ENCODE measurements at regions of chr17 and their contacts with region 1.

Region 1: DNA sequence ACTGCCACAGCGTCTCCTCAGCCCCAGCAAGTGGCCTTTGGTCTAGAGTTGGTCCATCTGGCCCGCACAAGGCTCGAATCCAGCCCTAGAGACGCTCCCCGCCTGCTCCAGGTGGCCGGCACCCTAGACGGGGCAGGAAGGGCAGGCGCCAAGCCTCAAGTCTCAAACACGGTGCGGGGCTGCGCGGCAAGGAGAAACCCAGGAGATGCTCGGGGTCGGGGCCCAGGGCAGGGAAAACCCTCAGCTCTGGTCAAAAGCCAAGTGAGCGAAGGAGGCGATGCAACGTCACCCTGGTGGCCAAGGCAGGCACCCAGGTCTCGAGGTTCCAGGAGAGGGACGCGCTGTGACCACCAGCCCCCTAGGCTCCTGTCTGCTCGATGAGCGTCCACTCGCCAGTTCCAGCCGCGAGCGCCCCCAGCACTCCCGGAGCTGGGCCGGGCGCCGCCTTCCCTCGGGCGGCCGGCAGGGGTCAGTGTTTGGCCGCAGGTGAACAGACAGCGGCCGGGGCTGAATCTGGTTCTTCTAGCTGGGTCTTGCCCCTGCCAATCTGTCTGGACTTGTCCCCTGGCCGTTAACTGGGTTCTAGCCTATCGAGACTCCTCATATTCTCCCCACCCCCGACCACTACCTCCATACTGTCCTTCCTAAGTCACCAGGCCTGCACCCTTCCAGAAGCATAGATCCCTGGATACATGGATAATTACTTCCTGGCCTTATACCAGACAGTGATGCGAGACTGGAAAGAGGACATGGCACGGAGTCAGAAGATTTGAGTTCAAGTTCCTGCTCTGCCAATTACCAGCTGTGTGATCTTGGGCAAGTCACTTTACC is 44.0 kb downstream of the PRAC1 start:
- DNase-seq: peak; percentile 67 to 88
- H3K4me3 ChIP-seq: peak overlapping the region; percentile 26
- H3K4me1 ChIP-seq: peaks cover 2% of the 10 kb centered on the region; the same call in 1 of the 2 replicates
- H3K27me3 ChIP-seq: no peaks in the 10 kb centered on the region

Region 2: GRCh38 chr17:48577946-48578615 is 100.3 kb before region 1 on chr17 and contains the start of gene HOXB4:
- in situ Hi-C with region 1: no loop called
- DNase-seq: peak; percentile 81 to 89
- H3K4me3 ChIP-seq: peak within 1 kb of the TSS; percentile 58
- H3K4me1 ChIP-seq: peaks cover 24% of the 10 kb centered on the region
- H3K27me3 ChIP-seq: no peaks in the 10 kb centered on the region

Region 3: DNA sequence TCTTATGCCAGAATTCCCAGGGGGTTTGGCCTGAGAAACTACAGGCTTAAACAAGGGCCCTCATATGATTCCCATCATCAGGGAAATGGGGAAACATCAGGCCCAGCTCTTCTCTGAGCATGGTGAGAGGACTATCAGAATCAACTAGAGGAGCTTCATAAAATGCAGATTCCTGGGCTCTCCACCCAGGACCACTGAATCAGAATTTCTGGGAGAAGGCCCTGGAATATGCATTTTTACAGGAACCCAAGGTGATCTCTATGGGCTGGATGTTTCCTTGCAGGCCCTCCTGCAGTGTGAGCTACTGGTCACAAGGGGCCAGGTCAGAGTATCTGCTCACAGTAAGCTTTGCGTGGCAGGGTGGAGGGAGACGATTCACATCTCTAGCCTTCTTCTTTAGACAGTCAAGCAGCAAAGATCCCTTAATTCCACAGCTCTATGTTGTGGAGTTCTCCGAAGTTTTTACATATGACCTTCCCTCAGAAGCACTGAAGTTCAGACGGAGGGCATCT is 89.0 kb after region 1 on chr17:
- in situ Hi-C with region 1: no loop called
- DNase-seq: no peak
- H3K4me3 ChIP-seq: no peak overlapping the region
- H3K4me1 ChIP-seq: no peaks in the 10 kb centered on the region
- H3K27me3 ChIP-seq: peaks cover 8% of the 10 kb centered on the region

Region 4: GRCh38 chr17:48791128-48792032 is 113.0 kb after region 1 on chr17:
- in situ Hi-C with region 1: loop called (anchors 5 kb)
- DNase-seq: peak; percentile 79 to 91
- H3K4me3 ChIP-seq: no peak overlapping the region
- H3K4me1 ChIP-seq: no peaks in the 10 kb centered on the region
- H3K27me3 ChIP-seq: no peaks in the 10 kb centered on the region

Region 5: DNA sequence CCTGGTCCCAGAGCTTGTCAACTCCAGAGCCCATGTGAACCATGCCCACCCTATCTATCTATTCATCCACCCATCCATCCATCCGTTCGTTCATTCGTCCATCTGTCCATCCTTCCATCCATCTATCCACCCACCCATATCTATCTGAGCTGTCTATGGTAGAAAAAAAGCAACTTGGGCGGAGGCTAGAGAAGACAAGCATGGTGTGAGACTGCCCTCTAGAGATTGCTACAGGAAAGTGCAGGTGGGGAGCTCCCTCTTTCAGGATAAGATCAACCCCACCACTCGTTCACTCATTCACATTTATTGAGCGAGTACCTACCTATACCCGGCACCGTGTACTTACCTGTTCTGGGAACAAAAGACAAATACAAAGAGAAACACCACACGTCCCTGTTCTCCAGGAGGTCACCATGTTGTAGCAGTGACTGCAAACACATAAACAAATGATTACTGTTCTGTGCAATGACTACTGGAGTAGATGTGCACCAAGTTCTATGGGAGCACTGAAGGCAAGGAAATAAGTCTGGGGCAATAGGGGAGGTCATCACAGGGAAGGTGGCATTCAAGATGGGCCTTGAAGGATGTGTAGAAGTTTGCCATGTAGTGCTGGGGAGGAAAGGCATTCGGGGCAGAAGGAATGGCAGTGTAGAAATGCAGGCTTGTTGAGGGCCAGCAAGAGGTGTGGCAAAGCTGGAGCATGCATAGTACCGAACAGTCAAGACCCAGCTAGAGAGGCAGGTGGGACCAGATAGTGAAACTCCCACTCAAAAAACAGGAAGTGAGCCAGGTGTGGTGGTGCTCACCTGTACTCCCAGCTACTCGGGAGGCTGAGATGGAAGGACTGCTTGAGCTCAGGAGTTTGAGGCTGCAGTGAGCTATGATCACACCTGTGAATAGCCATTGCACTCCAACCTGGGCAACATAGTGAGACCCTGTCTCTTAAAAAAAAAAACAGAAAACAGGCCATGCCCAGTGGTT is 200.9 kb after region 1 on chr17:
- in situ Hi-C with region 1: loop called (anchors 5 kb)
- DNase-seq: peak; percentile 71 to 78
- H3K4me3 ChIP-seq: no peak overlapping the region
- H3K4me1 ChIP-seq: no peaks in the 10 kb centered on the region
- H3K27me3 ChIP-seq: no peaks in the 10 kb centered on the region

Region 6: GRCh38 chr17:49031965-49032928 is 353.9 kb after region 1 on chr17:
- in situ Hi-C with region 1: loop called (anchors 25 kb)
- DNase-seq: peak; percentile 73 to 76
- H3K4me3 ChIP-seq: no peak overlapping the region
- H3K4me1 ChIP-seq: peaks cover 4% of the 10 kb centered on the region; the same call in 1 of the 2 replicates
- H3K27me3 ChIP-seq: no peaks in the 10 kb centered on the region